ENCODE measurements at regions of chr10 and their contacts with region 1.

Region 1: GRCh38 chr10:11525503-11525902 is 85.9 kb downstream of the USP6NL start:
- DNase-seq: no peak
- ATAC-seq: no peak
- H3K4me3 ChIP-seq: no peak overlapping the region
- H3K27ac ChIP-seq: no peak overlapping the region
- H3K4me1 ChIP-seq: peaks cover 49% of the 10 kb centered on the region
- H3K27me3 ChIP-seq: no peaks in the 10 kb centered on the region
- CTCF ChIP-seq: no peak
- EP300 ChIP-seq: no peak
- POLR2A ChIP-seq: no peak
- RAD21 ChIP-seq: no peak

Region 2: GRCh38 chr10:11255796-11256444 is 269.6 kb before region 1 on chr10:
- CTCF ChIA-PET with region 1: no interaction called
- POLR2A ChIA-PET with region 1: no interaction called
- in situ Hi-C with region 1: no loop called
- intact Hi-C with region 1: loop called (anchors 5 kb)
- DNase-seq: no peak
- ATAC-seq: no peak
- H3K4me3 ChIP-seq: no peak overlapping the region
- H3K27ac ChIP-seq: no peak overlapping the region
- H3K4me1 ChIP-seq: no peaks in the 10 kb centered on the region
- H3K27me3 ChIP-seq: peaks cover 10 to 92% of the 10 kb centered on the region in 2 experiments
- CTCF ChIP-seq: no peak
- EP300 ChIP-seq: no peak
- POLR2A ChIP-seq: no peak
- RAD21 ChIP-seq: no peak

Region 3: DNA sequence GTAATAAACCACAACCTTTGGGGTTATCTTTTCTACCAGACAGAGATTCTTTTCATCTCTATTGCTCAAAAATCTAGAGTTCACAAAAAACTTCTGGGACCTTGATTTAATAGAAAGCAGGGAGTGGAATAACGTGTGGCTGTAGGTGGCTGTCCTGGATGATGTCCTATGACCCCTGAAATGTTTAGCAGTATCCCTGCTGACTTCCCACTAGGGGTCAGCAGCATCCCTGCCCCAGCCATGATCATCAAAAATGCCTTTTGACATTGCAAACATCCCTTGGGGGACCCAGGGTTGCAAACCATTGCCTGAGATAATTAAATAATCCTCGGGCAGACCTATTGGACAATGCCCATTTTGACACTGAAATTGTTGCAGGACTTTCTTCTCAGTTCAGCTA is 91.2 kb before region 1 on chr10:
- CTCF ChIA-PET with region 1: no interaction called
- POLR2A ChIA-PET with region 1: no interaction called
- in situ Hi-C with region 1: no loop called
- intact Hi-C with region 1: no loop called
- DNase-seq: peak; percentile 16
- ATAC-seq: peak; percentile 77
- H3K4me3 ChIP-seq: no peak overlapping the region
- H3K27ac ChIP-seq: no peak overlapping the region
- H3K4me1 ChIP-seq: no peaks in the 10 kb centered on the region
- H3K27me3 ChIP-seq: peaks cover 4 to 40% of the 10 kb centered on the region in 2 experiments; a peak in 3 of 5 replicates
- CTCF ChIP-seq: peak; percentile 64
- EP300 ChIP-seq: no peak
- POLR2A ChIP-seq: no peak
- RAD21 ChIP-seq: peak; percentile 12; the same call in 1 of the 2 replicates

Region 4: DNA sequence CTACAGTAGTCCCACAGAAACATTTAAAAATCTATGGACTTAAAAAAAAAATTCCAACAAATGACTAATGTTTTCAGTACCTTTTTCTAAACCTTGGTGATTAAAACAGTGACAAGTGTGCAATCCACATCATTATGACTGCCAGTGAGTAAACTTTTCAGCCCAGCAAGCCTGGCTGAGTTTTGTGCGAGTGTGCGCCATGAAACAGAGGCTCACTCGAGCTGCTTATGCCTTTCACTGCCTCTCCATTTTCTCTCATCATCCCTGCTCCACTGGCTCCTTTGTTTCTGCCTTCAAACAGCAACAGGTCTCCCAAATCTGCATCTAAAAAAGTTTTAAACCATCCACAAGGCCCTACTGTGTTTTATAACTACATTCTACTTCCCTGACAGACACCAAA is 19.9 kb before region 1 on chr10:
- CTCF ChIA-PET with region 1: no interaction called
- POLR2A ChIA-PET with region 1: no interaction called
- in situ Hi-C with region 1: no loop called
- intact Hi-C with region 1: no loop called
- DNase-seq: no peak
- ATAC-seq: no peak
- H3K4me3 ChIP-seq: no peak overlapping the region
- H3K27ac ChIP-seq: no peak overlapping the region
- H3K4me1 ChIP-seq: peaks cover 7% of the 10 kb centered on the region; the same call in 1 of the 2 replicates
- H3K27me3 ChIP-seq: no peaks in the 10 kb centered on the region
- CTCF ChIP-seq: no peak
- EP300 ChIP-seq: no peak
- POLR2A ChIP-seq: no peak
- RAD21 ChIP-seq: no peak

Region 5: DNA sequence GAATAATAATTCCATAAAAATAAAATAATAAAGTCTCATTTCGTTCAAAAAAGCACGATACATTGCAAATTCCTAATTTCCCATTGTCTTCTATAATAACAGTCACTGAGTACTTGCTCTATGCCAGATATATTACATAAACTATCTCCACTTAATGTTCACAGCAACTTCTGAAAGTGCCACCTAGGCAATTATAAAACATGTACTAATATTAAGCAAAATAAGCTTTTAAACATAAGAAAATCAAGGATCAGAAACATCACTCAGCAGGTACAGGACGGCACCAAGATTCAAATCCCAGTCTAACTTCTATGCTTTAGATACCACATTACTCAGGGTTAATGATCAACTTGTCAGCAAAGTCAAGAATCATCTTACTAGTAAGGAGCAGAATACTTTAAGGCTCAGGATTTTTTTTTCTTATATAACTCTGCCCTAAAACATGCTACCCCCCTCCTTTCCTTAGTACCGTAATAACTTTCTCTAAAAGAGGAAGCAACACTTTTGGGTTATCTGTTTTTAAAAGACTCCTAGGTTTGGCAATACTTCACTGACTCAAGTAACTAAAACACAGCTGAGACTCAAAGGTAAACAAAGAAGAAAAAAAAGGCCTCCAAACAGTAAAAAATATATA is 34.7 kb after region 1 on chr10:
- CTCF ChIA-PET with region 1: no interaction called
- POLR2A ChIA-PET with region 1: no interaction called
- in situ Hi-C with region 1: no loop called
- intact Hi-C with region 1: loop called (anchors 5 kb)
- DNase-seq: no peak
- ATAC-seq: peak; percentile 78
- H3K4me3 ChIP-seq: no peak overlapping the region; a peak in 1 of 6 replicates
- H3K27ac ChIP-seq: no peak overlapping the region
- H3K4me1 ChIP-seq: peaks cover 36% of the 10 kb centered on the region
- H3K27me3 ChIP-seq: no peaks in the 10 kb centered on the region
- CTCF ChIP-seq: no peak
- EP300 ChIP-seq: no peak
- POLR2A ChIP-seq: no peak
- RAD21 ChIP-seq: no peak

Measured in HepG2 (cell line).